Activated CD4-positive, alpha-beta T cell treated with anti-CD3 and anti-CD28 coated beads, Interleukin-2, amount 10 ng/mL, durations not matched to agents 24 days and 14 days (primary cell): ENCODE measurements at regions of chr4 and their contacts with region 1.

Region 1: GRCh38 chr4:6986781-6987587 is 56.2 kb upstream of the TADA2B start:
- DNase-seq: peak; percentile 98
- H3K4me3 Mint-ChIP-seq: peak overlapping the region; percentile 96
- H3K27ac Mint-ChIP-seq: peak overlapping the region; percentile 95
- H3K4me1 Mint-ChIP-seq: peaks cover 72% of the 10 kb centered on the region
- H3K27me3 Mint-ChIP-seq: no peaks in the 10 kb centered on the region

Region 2: DNA sequence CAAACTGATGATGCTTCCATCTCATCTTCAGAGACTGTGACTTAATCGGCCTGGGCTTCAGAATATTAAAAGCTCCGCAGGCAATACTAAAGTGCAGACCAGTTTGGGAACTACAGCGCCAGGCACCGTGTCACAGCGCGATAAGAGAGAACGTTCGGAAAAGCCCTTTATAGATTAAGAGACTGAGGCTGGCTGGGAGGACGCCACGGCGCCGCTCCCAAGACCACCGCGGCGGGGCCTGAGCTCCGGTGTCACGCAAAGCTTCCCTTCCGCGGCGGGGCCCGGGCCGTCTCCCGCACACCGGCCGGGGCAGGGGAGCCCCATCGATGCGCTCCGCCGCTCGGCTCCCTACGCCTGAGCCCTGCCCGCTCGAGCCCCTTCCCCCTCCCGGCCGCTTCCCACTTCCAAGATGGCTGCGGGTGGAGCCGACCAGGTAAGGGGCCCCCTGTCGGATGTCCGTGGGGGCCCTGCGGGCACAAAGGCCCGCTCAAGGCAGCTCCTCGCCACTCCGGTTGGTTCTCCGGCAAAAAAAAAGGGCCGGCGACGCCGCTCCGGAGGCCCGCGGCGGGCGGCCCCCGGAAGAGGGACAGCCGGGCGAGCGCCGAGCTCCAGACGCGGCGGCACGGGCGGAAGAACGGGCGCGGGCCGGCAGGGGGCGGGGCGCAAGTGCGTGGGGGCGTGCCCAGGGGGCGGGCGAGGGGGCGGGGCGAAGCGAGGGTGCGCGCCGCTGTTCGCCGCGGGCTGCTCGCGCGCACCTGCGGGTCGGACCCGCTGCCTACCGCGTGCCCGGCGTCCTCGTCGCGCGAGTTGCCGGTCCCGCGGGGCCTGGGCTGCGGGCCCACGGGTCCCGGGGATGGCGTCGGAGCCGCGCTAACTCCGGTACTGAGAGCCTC is 77.7 kb before region 1 on chr4 and contains the start of gene TBC1D14:
- intact Hi-C with region 1: loop called (anchors 1 kb)
- DNase-seq: peak; percentile 95
- H3K4me3 Mint-ChIP-seq: peak within 1 kb of the TSS; percentile 96
- H3K27ac Mint-ChIP-seq: peak within 1 kb of the TSS; percentile 95
- H3K4me1 Mint-ChIP-seq: peaks cover 47% of the 10 kb centered on the region
- H3K27me3 Mint-ChIP-seq: no peaks in the 10 kb centered on the region
- total RNA-seq, gene TBC1D14: 47.2 and 47.3 TPM in 2 replicates

Region 3: DNA sequence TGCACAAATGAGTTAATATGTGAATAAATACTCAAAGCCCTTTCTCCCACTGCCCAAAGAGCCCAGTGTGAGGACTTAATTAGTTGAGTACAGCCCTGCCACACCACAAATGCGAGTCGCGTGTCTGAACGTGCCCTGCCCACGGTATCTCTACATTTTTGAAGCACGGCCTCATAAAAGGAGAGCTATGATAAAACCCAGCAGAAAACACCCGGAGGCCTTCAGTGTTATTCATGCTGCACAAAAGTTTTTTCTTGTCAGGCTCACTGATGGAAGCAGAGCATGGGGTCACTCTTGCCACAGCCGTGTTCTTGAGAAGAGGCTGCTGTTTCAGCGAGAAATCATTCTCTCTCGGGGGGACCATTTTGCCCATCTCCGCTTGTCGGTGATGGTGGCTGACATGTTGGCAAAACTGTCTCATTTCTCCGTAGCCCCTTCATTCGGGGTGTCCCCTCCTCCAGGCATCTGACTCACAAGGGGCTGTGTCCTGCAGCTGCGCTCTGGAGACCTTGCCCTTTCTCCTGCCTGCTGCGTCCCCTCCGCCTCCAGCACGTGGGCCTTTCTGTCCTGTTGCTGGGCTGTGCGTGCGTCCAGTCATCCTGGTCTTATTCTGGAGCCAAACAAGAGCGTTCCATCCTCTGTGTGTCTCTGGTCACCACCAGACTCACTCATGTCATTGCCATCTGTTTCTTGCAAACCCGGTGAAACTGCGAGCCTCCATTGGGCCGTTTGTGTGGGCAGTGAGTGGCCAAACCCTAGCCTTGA is 294.1 kb after region 1 on chr4:
- intact Hi-C with region 1: no loop called
- DNase-seq: no peak
- H3K4me3 Mint-ChIP-seq: no peak overlapping the region
- H3K27ac Mint-ChIP-seq: no peak overlapping the region
- H3K4me1 Mint-ChIP-seq: no peaks in the 10 kb centered on the region
- H3K27me3 Mint-ChIP-seq: peaks cover 5% of the 10 kb centered on the region

Region 4: DNA sequence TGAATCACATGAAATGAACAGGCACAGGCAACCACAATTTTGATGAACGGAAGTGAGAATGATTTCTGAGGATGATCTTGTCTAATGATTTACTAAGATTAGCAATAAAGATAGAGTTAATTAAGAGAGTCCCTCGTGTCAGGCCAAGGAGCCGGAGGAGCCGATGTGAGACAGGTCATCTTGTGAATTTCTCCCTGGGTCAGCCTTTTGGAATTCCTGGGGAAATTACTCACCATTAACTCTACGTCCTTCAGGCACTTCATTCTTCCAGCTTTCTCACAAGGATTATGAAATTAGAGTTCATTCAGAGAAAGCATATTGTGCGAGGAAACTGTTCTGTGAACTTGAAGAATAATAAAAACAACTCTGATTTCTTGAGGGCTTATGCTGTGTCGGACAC is 361.0 kb after region 1 on chr4:
- intact Hi-C with region 1: no loop called
- DNase-seq: no peak
- H3K4me3 Mint-ChIP-seq: no peak overlapping the region
- H3K27ac Mint-ChIP-seq: no peak overlapping the region
- H3K4me1 Mint-ChIP-seq: no peaks in the 10 kb centered on the region
- H3K27me3 Mint-ChIP-seq: no peaks in the 10 kb centered on the region